Dendritic cell treated with granulocyte-macrophage colony-stimulating factor and Interleukin-4, amounts not matched to agents 40 ng/mL and 50 ng/mL, for 4 days (primary cell): ENCODE measurements at regions of chr20 and their contacts with region 1.

Region 1: DNA sequence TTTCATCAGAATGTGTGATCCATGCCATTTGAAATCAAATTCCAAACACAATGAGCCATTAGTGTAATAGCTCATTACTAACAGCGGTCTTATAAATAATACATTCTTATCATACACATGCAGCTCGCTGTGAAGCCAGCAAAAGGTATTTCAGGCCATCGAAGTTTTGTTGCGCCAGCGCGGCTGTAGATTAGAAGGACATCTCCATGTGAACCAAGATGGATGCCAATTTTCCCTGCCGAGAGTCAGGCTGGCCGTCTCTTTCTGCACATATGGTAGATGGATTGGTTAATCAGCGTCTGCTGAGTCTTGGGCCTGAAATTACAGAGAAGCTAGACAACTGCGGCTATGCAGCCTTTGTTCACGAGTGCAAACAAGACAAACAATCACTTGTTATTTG is 44.1 kb downstream of the CFAP61 start:
- H3K4me3 Mint-ChIP-seq: no peak overlapping the region
- H3K27ac Mint-ChIP-seq: no peak overlapping the region
- H3K4me1 Mint-ChIP-seq: no peaks in the 10 kb centered on the region
- H3K27me3 Mint-ChIP-seq: no peaks in the 10 kb centered on the region

Region 2: GRCh38 chr20:19725814-19726525 is 370.5 kb before region 1 on chr20:
- intact Hi-C with region 1: no loop called
- H3K4me3 Mint-ChIP-seq: no peak overlapping the region
- H3K27ac Mint-ChIP-seq: peak overlapping the region; percentile 65
- H3K4me1 Mint-ChIP-seq: peaks cover 41% of the 10 kb centered on the region
- H3K27me3 Mint-ChIP-seq: no peaks in the 10 kb centered on the region

Region 3: DNA sequence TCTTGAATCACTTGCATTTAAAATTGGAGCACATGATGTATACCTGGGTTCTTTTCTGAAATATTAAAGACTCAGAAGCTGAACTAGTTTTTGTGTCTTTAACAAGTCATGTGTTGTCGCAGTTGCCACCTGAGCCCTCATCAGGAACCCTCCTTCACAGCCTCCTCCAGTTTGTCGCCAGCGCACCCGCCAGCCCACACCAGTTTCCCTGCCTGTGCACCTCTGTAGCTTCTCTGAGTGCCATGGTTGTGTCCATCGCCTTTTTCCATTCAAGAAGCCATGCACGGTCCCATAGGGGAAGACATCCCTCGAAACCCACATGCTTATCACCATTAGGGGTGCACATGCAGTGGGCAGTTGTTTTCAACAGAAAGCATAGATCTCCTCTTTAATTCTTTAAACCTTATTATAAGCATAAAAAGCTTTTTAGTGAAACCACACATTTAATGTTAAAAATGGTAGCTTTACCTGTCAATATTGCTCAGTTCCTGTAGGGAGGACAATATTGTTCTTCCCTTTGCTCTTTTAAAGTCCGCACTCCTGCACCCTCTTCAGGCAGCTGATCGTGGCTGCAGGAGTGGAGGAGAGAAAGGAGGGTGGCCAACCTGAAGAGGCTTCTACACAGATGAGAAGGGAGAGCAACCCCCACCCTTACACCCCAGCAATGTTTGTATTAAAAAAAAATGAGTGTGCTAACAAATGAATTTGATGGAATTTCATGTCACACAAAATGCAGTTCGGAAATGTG is 77.8 kb after region 1 on chr20:
- intact Hi-C with region 1: loop called (anchors 10 kb)
- H3K4me3 Mint-ChIP-seq: no peak overlapping the region
- H3K27ac Mint-ChIP-seq: no peak overlapping the region
- H3K4me1 Mint-ChIP-seq: no peaks in the 10 kb centered on the region
- H3K27me3 Mint-ChIP-seq: peaks cover 3% of the 10 kb centered on the region